CD8-positive, alpha-beta memory T cell (primary cell): ENCODE measurements at regions of chrX and their contacts with region 1.

Region 1: DNA sequence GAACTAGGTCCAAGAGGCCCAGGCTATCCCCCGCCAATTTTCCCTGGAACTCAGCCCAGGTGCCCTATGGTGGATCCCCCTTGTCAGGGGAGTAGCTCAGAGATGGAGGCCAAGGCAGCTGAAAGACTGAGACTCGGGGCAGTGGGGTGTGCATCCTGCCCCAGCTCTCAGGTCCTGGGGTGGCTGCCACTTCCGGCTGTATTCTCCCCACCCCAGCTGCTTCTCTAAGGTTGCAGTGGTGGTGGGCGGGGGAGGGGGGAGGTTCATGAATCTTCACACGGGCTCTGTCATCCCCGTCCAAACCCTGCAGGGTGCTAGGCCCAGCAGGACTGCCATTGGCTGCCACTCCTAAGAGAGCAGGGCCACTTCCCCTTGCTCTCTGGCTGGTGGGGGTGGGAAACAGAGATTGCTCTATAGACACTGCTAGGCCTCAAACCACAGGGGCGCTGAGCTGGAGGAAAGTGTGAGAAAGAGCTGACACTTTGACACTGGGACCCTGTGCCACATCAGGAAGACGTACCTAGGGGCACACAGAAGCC is 1.5 kb downstream of the SASH3 start:
- DNase-seq: peak; percentile 69 to 94 (median 81)
- H3K4me3 ChIP-seq: peak overlapping the region; percentile 84
- H3K4me3 Mint-ChIP-seq: peak overlapping the region; percentile 87 to 100 (median 97)
- H3K27ac ChIP-seq: peak overlapping the region; percentile 64
- H3K27ac Mint-ChIP-seq: peak overlapping the region; percentile 83 to 96 (median 95)
- H3K4me1 ChIP-seq: peaks cover 69% of the 10 kb centered on the region
- H3K4me1 Mint-ChIP-seq: peaks cover 77 to 97% (median 91%) of the 10 kb centered on the region in 3 donors
- H3K27me3 ChIP-seq: no peaks in the 10 kb centered on the region
- H3K27me3 Mint-ChIP-seq: no peaks in the 10 kb centered on the region

Region 2: GRCh38 chrX:129754056-129755024 is 26.9 kb before region 1 on chrX:
- CTCF ChIA-PET with region 1: interaction called, 36 read pairs
- POLR2A ChIA-PET with region 1: interaction called, 27 read pairs
- DNase-seq: no peak
- H3K4me3 ChIP-seq: no peak overlapping the region
- H3K4me3 Mint-ChIP-seq: peak overlapping the region in 2 of 7 donors; percentile 52 to 85
- H3K27ac ChIP-seq: no peak overlapping the region
- H3K27ac Mint-ChIP-seq: peak overlapping the region in 2 of 8 donors; percentile 47 to 88
- H3K4me1 ChIP-seq: peaks cover 49% of the 10 kb centered on the region
- H3K4me1 Mint-ChIP-seq: peaks cover 45 to 59% (median 56%) of the 10 kb centered on the region in 3 donors
- H3K27me3 ChIP-seq: no peaks in the 10 kb centered on the region
- H3K27me3 Mint-ChIP-seq: peaks cover 0 to 3% of the 10 kb centered on the region in 2 donors

Region 3: DNA sequence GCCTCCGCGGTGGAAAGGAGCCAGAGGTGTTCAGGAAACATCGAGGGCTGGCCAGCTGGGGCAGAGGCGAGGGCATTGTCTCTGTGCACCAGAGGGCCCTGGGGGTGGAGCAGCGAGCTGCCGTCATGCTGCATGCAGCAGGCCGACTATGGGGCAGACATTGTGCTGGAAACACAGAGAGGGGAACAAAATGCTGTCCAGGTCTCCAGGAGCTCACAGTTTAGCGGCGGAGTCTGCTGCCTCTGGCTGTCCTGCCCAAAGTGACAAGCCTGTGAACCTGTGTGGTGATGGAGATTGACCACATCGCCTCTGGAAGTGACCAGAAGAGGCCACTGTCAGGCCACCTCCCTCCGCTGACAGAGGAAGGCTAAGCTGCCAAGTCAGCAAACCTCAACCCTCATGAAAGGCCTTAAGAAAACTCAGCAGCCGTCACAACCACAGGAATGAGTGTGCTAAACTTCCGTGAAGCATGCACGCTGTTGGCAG is 21.6 kb before region 1 on chrX:
- CTCF ChIA-PET with region 1: interaction called, 36 read pairs
- POLR2A ChIA-PET with region 1: interaction called, 27 read pairs
- DNase-seq: peak in 3 of 5 donors; percentile 66 to 71 (median 67)
- H3K4me3 ChIP-seq: no peak overlapping the region
- H3K4me3 Mint-ChIP-seq: peak overlapping the region; percentile 30 to 75 (median 49)
- H3K27ac ChIP-seq: peak overlapping the region; percentile 31
- H3K27ac Mint-ChIP-seq: peak overlapping the region; percentile 68 to 95 (median 88)
- H3K4me1 ChIP-seq: peaks cover 72% of the 10 kb centered on the region
- H3K4me1 Mint-ChIP-seq: peaks cover 63 to 79% (median 73%) of the 10 kb centered on the region in 3 donors
- H3K27me3 ChIP-seq: no peaks in the 10 kb centered on the region
- H3K27me3 Mint-ChIP-seq: peaks cover 0 to 4% of the 10 kb centered on the region in 2 donors

Region 4: DNA sequence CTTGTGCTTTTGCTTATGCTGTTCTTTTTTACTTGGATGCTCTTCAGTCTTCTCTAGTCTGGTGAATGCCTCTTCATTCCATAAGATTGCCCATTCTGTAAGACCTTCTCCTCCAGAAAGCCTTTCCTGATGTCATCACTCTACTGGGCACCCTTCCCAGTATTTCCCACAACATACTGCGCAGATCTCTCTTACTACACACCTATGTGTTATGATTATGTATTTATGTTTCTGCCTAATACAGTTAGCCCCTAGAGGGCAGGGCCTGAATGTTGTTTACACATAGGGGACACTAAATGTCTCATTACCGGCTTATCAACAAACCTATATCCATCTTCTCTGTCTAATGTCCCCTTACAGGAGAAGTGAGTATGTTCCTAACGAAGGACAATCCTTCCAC is 363.3 kb after region 1 on chrX:
- CTCF ChIA-PET with region 1: no interaction called
- POLR2A ChIA-PET with region 1: no interaction called
- DNase-seq: no peak
- H3K4me3 ChIP-seq: no peak overlapping the region
- H3K4me3 Mint-ChIP-seq: no peak overlapping the region
- H3K27ac ChIP-seq: no peak overlapping the region
- H3K27ac Mint-ChIP-seq: peak overlapping the region in 1 of 8 donors; percentile 6
- H3K4me1 ChIP-seq: no peaks in the 10 kb centered on the region
- H3K4me1 Mint-ChIP-seq: no peaks in the 10 kb centered on the region
- H3K27me3 ChIP-seq: no peaks in the 10 kb centered on the region
- H3K27me3 Mint-ChIP-seq: peaks cover 0 to 7% of the 10 kb centered on the region in 2 donors

Region 5: GRCh38 chrX:130741584-130741983 is 960.4 kb after region 1 on chrX:
- CTCF ChIA-PET with region 1: no interaction called
- POLR2A ChIA-PET with region 1: no interaction called
- DNase-seq: no peak
- H3K4me3 ChIP-seq: no peak overlapping the region
- H3K4me3 Mint-ChIP-seq: no peak overlapping the region
- H3K27ac ChIP-seq: no peak overlapping the region
- H3K27ac Mint-ChIP-seq: no peak overlapping the region
- H3K4me1 ChIP-seq: no peaks in the 10 kb centered on the region
- H3K4me1 Mint-ChIP-seq: no peaks in the 10 kb centered on the region
- H3K27me3 ChIP-seq: no peaks in the 10 kb centered on the region
- H3K27me3 Mint-ChIP-seq: peaks cover 0 to 2% of the 10 kb centered on the region in 2 donors